ENCODE measurements at regions of chr1 and their contacts with region 1.

Region 1: DNA sequence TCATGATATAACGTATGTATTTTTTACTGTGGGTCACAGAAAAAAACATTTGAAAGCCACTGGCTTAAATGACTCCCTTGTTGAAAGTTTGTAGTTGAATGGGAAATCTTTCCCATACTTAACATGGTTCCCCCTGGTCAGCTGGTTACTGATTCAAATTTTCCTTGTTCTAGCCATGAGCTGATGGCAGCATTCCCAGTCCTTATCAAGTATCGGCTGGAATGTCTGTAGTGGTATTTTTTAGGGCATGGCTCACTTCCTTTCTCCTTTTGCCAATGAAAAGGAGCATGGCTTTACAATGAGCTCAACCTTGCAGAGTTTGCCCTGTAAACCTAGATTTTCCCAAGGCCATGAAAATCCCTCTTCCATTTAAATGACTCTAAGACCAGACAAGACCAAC is 55.7 kb downstream of the GIPC2 start:
- DNase-seq: peak; percentile 99
- H3K4me3 ChIP-seq: no peak overlapping the region
- H3K27ac ChIP-seq: peak overlapping the region; percentile 98
- H3K4me1 ChIP-seq: peaks cover 52% of the 10 kb centered on the region
- H3K27me3 ChIP-seq: no peaks in the 10 kb centered on the region
- CTCF ChIP-seq: no peak
- POLR2A ChIP-seq: peak; percentile 60

Region 2: DNA sequence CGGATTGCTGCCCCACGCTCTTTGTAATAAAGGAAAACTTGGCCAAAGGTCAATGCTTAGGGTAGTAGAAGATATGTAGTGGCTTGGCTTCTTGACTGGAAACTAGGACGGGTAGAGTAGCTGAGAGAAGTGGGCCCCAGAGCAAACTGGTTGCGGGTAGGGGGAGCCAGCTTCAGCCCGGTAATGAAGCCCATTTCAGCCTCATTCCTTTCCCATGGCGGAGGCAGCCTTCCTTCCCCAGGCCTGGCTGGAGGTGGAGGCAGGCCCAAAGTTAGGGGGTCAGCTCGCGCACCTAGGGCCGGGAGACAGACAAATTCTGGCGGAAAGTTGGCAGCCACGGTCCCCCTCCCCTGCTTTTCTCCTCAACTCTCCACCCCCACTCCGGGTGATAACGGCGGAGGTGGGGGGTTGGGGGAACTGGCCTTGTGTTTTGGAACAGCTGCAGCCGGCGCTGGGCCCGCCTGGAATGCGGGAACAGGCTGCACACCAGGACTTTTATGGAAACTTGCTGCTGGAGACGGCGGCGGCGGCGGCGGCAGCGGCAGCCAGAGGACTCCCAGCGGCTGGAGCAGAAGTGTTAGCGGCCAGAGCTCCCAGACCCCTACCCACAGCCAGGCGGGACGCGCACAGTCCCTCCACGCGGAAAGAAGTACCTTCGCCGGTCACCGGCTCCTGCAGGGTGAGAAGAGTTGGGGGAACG is 213.3 kb before region 1 on chr1 and contains the start of gene NEXN:
- CTCF ChIA-PET with region 1: no interaction called
- POLR2A ChIA-PET with region 1: no interaction called
- dilution Hi-C with region 1: no loop called
- intact Hi-C with region 1: loop called (anchors 5 kb)
- DNase-seq: peak; percentile 80
- H3K4me3 ChIP-seq: peak within 1 kb of the TSS; percentile 85 to 96 (median 88)
- H3K27ac ChIP-seq: peak within 1 kb of the TSS; percentile 96
- H3K4me1 ChIP-seq: peaks cover 19% of the 10 kb centered on the region
- H3K27me3 ChIP-seq: no peaks in the 10 kb centered on the region
- CTCF ChIP-seq: no peak
- POLR2A ChIP-seq: no peak
- total RNA-seq, gene NEXN: 11.7 and 14.2 TPM in 2 replicates

Region 3: GRCh38 chr1:77978969-77979876 is 122.3 kb before region 1 on chr1 and contains the start of gene FUBP1:
- CTCF ChIA-PET with region 1: interaction called, 4 read pairs
- POLR2A ChIA-PET with region 1: interaction called, 6 read pairs
- dilution Hi-C with region 1: no loop called
- intact Hi-C with region 1: loop called (anchors 1 kb)
- DNase-seq: peak; percentile 99
- H3K4me3 ChIP-seq: peak within 1 kb of the TSS; percentile 43 to 100 (median 95)
- H3K27ac ChIP-seq: peak within 1 kb of the TSS; percentile 100
- H3K4me1 ChIP-seq: peaks cover 38% of the 10 kb centered on the region
- H3K27me3 ChIP-seq: no peaks in the 10 kb centered on the region
- CTCF ChIP-seq: peak; percentile 66 to 76
- POLR2A ChIP-seq: peak; percentile 98
- total RNA-seq, gene FUBP1: 163 and 166 TPM in 2 replicates

Region 4: DNA sequence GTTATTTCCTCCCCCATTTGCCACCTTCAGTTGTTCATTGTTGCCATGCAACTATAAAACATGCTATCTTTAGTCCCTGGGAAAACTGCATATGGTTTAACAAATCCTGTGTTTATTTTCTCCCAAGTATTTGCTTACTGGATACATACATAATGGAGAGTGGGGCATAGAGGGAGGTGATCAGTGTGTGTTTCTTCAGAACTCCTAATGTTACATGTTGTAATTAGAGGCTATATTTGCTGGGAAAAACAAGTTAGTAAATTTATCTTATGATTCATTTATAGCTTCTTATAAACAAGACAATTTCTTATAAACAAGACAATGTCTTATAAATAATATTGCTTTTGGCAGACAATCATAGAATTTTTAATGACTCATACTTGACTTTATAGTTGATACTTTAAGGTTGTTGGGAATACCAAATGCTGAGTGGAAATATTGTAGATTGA is 63.0 kb before region 1 on chr1:
- CTCF ChIA-PET with region 1: interaction called, 3 read pairs
- POLR2A ChIA-PET with region 1: no interaction called
- dilution Hi-C with region 1: no loop called
- intact Hi-C with region 1: loop called (anchors 1 kb)
- DNase-seq: peak; percentile 91
- H3K4me3 ChIP-seq: no peak overlapping the region
- H3K27ac ChIP-seq: peak overlapping the region; percentile 59
- H3K4me1 ChIP-seq: peaks cover 16% of the 10 kb centered on the region
- H3K27me3 ChIP-seq: no peaks in the 10 kb centered on the region
- CTCF ChIP-seq: no peak
- POLR2A ChIP-seq: no peak

Region 5: GRCh38 chr1:78045926-78046778 is 55.4 kb before region 1 on chr1 and contains the start of gene GIPC2:
- CTCF ChIA-PET with region 1: interaction called, 8 read pairs
- POLR2A ChIA-PET with region 1: interaction called, 6 read pairs
- dilution Hi-C with region 1: no loop called
- intact Hi-C with region 1: loop called (anchors 1 kb)
- DNase-seq: peak; percentile 59
- H3K4me3 ChIP-seq: peak within 1 kb of the TSS; percentile 63 to 74 (median 73)
- H3K27ac ChIP-seq: peak within 1 kb of the TSS; percentile 53
- H3K4me1 ChIP-seq: peaks cover 31% of the 10 kb centered on the region
- H3K27me3 ChIP-seq: no peaks in the 10 kb centered on the region
- CTCF ChIP-seq: no peak
- POLR2A ChIP-seq: no peak
- total RNA-seq, gene GIPC2: 7.7 and 9.6 TPM in 2 replicates

Region 6: DNA sequence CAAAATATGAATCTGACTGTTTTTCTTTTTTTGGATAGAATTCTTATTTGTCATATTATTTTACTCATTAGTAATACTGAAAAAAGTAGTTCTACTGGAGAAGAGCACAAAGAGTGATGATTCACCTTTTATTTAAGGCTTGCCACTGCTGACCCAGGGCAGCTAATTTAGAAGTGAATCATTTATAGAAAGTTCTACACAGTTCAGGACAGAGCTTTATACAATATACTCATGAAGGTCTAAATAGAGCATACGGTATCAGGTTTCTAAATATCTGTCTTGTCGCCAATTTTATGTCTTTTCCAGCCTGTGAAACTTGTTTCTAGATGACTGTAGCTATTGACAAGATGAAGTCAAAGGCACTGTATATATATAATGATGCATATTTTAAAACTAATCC is 30.8 kb before region 1 on chr1:
- CTCF ChIA-PET with region 1: interaction called, 11 read pairs
- POLR2A ChIA-PET with region 1: no interaction called
- dilution Hi-C with region 1: no loop called
- intact Hi-C with region 1: loop called (anchors 1 kb)
- DNase-seq: peak; percentile 87
- H3K4me3 ChIP-seq: no peak overlapping the region
- H3K27ac ChIP-seq: peak overlapping the region; percentile 48
- H3K4me1 ChIP-seq: peaks cover 54% of the 10 kb centered on the region
- H3K27me3 ChIP-seq: no peaks in the 10 kb centered on the region
- CTCF ChIP-seq: no peak
- POLR2A ChIP-seq: no peak

Region 7: DNA sequence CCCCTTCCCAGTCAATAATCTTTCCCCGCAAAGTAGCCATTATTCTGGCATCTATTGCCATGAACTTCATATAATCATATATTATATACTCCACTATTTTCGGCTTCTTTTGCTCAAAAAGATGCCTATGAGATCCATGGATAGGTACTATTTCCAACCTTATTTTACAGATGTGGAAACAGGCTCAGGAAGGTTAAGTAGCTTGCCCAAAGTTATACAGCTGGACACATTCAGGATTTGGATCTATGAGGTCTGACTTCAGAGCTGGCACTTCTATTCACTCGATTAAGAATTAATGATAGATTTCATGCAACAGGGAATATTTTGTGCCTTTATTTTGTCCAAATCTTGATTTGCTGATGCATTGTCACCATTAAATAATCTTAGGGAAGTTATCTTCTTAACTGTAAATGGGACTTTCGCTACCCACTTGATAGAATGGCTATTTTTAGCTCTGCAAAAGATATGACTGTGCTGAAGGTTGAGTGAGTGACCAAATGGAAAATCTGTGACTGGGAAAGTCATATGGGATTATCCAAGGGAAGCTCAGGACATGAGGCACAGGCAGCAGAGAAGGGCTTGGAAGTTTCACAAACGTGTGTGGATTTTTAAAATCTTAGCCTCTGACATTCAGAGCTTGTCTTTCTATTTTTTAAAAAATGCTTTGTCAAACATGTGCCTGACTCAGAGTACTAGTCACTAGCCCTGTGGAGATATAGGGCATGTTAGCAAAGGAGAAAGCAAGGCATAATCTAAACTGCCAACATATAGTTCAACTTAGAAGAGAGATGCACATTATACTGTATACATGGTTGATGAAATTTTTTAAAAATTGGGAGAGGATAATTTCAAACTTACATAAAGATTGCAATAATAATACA is 19.3 kb before region 1 on chr1:
- CTCF ChIA-PET with region 1: interaction called, 24 read pairs
- POLR2A ChIA-PET with region 1: interaction called, 12 read pairs
- dilution Hi-C with region 1: no loop called
- intact Hi-C with region 1: loop called (anchors 1 kb)
- DNase-seq: peak; percentile 53
- H3K4me3 ChIP-seq: no peak overlapping the region
- H3K27ac ChIP-seq: no peak overlapping the region
- H3K4me1 ChIP-seq: peaks cover 39% of the 10 kb centered on the region
- H3K27me3 ChIP-seq: no peaks in the 10 kb centered on the region
- CTCF ChIP-seq: no peak
- POLR2A ChIP-seq: no peak

Measured in endothelial cell of umbilical vein (primary cell).